A673 (cell line): ENCODE measurements at regions of chr5 and their contacts with region 1.

Region 1: DNA sequence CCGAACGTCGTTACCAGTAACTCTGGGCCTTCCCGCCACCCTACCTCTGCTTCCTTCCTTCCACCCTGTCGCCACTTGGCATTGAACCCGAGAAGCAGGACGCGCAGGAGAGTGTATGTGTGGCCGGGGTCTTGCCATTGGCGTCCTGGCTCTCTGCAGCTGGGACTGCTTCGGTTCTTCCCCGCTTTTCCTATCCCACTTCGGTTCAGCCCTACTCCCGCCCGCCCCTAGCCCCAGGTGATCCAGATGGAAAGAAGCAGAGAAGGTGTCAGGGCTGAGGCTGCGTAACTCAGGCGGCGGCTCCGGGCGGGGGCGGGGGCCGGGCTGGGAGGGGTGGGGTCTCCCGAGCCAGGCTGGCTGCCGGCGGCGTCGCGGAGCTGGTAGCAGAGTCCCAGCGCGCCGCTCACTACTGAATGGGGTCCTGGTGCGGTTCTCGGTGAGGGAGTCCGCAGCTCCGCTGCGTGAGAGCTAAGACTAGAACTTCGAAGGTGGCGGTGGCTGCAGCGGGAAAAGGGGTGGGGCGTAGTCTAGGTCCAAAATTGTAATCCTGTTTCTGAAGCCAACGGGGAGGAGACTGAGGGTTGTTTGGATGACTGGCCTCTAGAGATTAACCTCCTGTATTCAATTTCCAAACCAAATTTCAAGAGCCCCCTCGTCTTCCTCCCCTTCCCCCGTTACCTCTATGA is 1.3 kb downstream of the PRR16 start:
- DNase-seq: no peak
- H3K4me3 ChIP-seq: peak overlapping the region; percentile 42
- H3K27ac ChIP-seq: no peak overlapping the region
- H3K4me1 ChIP-seq: peaks cover 8% of the 10 kb centered on the region
- H3K27me3 ChIP-seq: peaks cover 53% of the 10 kb centered on the region
- CTCF ChIP-seq: no peak

Region 2: GRCh38 chr5:121218086-121218485 is 752.7 kb after region 1 on chr5:
- CTCF ChIA-PET with region 1: no interaction called
- POLR2A ChIA-PET with region 1: no interaction called
- intact Hi-C with region 1: no loop called
- DNase-seq: peak; percentile 66
- H3K4me3 ChIP-seq: no peak overlapping the region
- H3K27ac ChIP-seq: no peak overlapping the region
- H3K4me1 ChIP-seq: peaks cover 16% of the 10 kb centered on the region
- H3K27me3 ChIP-seq: no peaks in the 10 kb centered on the region
- CTCF ChIP-seq: no peak

Region 3: DNA sequence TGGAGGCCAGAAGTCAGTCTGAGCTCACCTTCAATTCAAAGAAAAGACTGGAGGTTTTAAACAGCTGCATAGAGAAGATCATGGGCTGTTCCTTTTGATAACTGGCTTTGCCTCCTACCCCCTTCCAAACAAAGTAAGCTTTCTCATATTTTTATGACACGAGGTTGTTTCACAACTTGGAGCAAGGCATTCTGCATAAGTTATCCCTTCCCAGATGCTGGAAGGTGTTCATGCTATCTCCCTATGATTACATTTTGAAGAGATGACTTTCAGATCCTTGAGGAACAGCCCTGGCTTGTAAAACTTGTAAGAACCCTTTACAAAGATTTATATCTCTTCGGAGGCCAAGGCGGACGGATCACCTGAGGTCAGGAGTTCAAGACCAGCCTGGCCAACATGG is 814.4 kb after region 1 on chr5:
- CTCF ChIA-PET with region 1: no interaction called
- POLR2A ChIA-PET with region 1: interaction called, 11 read pairs
- intact Hi-C with region 1: no loop called
- DNase-seq: no peak
- H3K4me3 ChIP-seq: no peak overlapping the region
- H3K27ac ChIP-seq: no peak overlapping the region
- H3K4me1 ChIP-seq: no peaks in the 10 kb centered on the region
- H3K27me3 ChIP-seq: no peaks in the 10 kb centered on the region
- CTCF ChIP-seq: no peak